Left colon (tissue), 2 donors: ENCODE measurements at regions of chr7 and their contacts with region 1.

Region 1: GRCh38 chr7:64618785-64619456 is 47.0 kb upstream of the ZNF107 start:
- DNase-seq: no peak
- ATAC-seq: no peak

Region 2: DNA sequence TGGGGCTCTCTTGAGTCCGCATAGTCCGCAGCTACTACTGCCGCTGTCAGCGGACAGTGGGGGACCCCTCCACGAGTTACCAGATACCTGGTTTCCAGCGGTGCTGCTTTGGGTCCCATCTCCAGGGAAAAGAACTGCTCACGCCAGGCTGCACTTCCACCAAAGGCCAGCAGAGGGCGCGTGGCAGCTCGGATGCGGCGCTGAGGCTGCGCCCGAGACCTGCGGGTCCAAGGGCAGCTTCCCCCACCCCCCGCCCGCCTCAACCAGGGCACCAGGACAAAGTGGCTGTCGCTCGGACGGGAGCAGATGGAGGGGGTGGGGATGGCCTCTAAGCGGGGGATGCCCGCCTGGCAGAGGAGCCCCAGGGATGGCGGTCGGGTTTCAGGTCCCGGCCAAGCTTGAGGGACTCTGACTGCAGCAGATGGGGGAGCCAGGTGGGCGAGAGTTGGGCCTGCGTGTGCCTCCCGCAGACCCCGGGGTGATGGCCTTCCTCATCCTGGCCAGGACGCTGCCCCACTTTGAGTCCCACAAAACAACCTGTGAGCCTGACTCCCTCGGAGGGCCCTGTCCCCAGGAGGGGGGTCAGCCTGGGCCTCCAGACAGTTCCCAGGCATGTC is 435.7 kb before region 1 on chr7:
- intact Hi-C with region 1: loop called (anchors 5 to 10 kb)
- DNase-seq: peak in 1 of 2 donors; percentile 6
- ATAC-seq: no peak

Region 3: GRCh38 chr7:64294701-64295420 is 324.1 kb before region 1 on chr7:
- intact Hi-C with region 1: no loop called
- DNase-seq: no peak
- ATAC-seq: no peak